CD4-positive, alpha-beta memory T cell (primary cell): ENCODE measurements at regions of chr6 and their contacts with region 1.

Region 1: GRCh38 chr6:43575772-43576551 is at the starts of genes POLH and XPO5:
- DNase-seq: peak; percentile 88 to 90 (median 90)
- H3K4me3 ChIP-seq: peak within 1 kb of the TSS; percentile 71 to 82
- H3K4me3 Mint-ChIP-seq: peak within 1 kb of the TSS; percentile 93 to 99 (median 98)
- H3K27ac ChIP-seq: peak within 1 kb of the TSS; percentile 79
- H3K27ac Mint-ChIP-seq: peak within 1 kb of the TSS; percentile 85 to 96 (median 95)
- H3K4me1 ChIP-seq: peaks cover 33% of the 10 kb centered on the region
- H3K4me1 Mint-ChIP-seq: peaks cover 23 to 48% (median 36%) of the 10 kb centered on the region in 4 donors
- H3K27me3 ChIP-seq: no peaks in the 10 kb centered on the region
- H3K27me3 Mint-ChIP-seq: no peaks in the 10 kb centered on the region
- total RNA-seq, gene POLH: 27.1 to 31.9 TPM
- total RNA-seq, gene XPO5: 42.2 to 43.4 TPM

Region 2: GRCh38 chr6:43516697-43517504 is 59.1 kb before region 1 on chr6 and contains the starts of genes POLR1C and YIPF3:
- CTCF ChIA-PET with region 1: no interaction called
- POLR2A ChIA-PET with region 1: interaction called, 5 read pairs
- intact Hi-C with region 1: loop called (anchors 2 kb)
- DNase-seq: peak; percentile 91 to 97 (median 96)
- H3K4me3 ChIP-seq: peak within 1 kb of the TSS; percentile 91 to 99
- H3K4me3 Mint-ChIP-seq: no peak within 1 kb of the TSS
- H3K27ac ChIP-seq: peak within 1 kb of the TSS; percentile 92
- H3K27ac Mint-ChIP-seq: no peak within 1 kb of the TSS
- H3K4me1 ChIP-seq: peaks cover 44% of the 10 kb centered on the region
- H3K4me1 Mint-ChIP-seq: peaks cover 10 to 36% (median 24%) of the 10 kb centered on the region in 4 donors
- H3K27me3 ChIP-seq: no peaks in the 10 kb centered on the region
- H3K27me3 Mint-ChIP-seq: no peaks in the 10 kb centered on the region
- total RNA-seq, gene POLR1C: 42.5 to 47.7 TPM
- total RNA-seq, gene YIPF3: 74.8 to 82.9 TPM

Region 3: GRCh38 chr6:43635387-43636307 is 59.7 kb after region 1 on chr6 and contains the start of gene MAD2L1BP:
- CTCF ChIA-PET with region 1: no interaction called
- POLR2A ChIA-PET with region 1: interaction called, 12 read pairs
- intact Hi-C with region 1: no loop called
- DNase-seq: peak; percentile 85 to 89 (median 87)
- H3K4me3 ChIP-seq: peak within 1 kb of the TSS; percentile 66 to 94
- H3K4me3 Mint-ChIP-seq: peak within 1 kb of the TSS; percentile 93 to 100 (median 99)
- H3K27ac ChIP-seq: peak within 1 kb of the TSS; percentile 84
- H3K27ac Mint-ChIP-seq: peak within 1 kb of the TSS; percentile 96 to 98 (median 97)
- H3K4me1 ChIP-seq: peaks cover 49% of the 10 kb centered on the region
- H3K4me1 Mint-ChIP-seq: peaks cover 26 to 62% (median 41%) of the 10 kb centered on the region in 4 donors
- H3K27me3 ChIP-seq: no peaks in the 10 kb centered on the region
- H3K27me3 Mint-ChIP-seq: no peaks in the 10 kb centered on the region
- total RNA-seq, gene MAD2L1BP: 31.7 to 33.0 TPM

Region 4: GRCh38 chr6:43647613-43648012 is 71.7 kb after region 1 on chr6:
- CTCF ChIA-PET with region 1: no interaction called
- POLR2A ChIA-PET with region 1: no interaction called
- intact Hi-C with region 1: no loop called
- DNase-seq: no peak
- H3K4me3 ChIP-seq: no peak overlapping the region
- H3K4me3 Mint-ChIP-seq: no peak overlapping the region
- H3K27ac ChIP-seq: no peak overlapping the region
- H3K27ac Mint-ChIP-seq: no peak overlapping the region
- H3K4me1 ChIP-seq: peaks cover 4% of the 10 kb centered on the region
- H3K4me1 Mint-ChIP-seq: peaks cover 8 to 22% (median 15%) of the 10 kb centered on the region in 4 donors
- H3K27me3 ChIP-seq: no peaks in the 10 kb centered on the region
- H3K27me3 Mint-ChIP-seq: peaks cover 0 to 2% of the 10 kb centered on the region in 2 donors